GM12878 (cell line): ENCODE measurements at regions of chr4 and their contacts with region 1.

Region 1: GRCh38 chr4:102760645-102761295 is at the start of gene MANBA:
- DNase-seq: no peak
- ATAC-seq: peak; percentile 94
- H3K4me3 ChIP-seq: peak within 1 kb of the TSS; percentile 98
- H3K27ac ChIP-seq: peak within 1 kb of the TSS; percentile 85
- H3K4me1 ChIP-seq: no peaks in the 10 kb centered on the region; the same call in 1 of the 2 replicates
- H3K27me3 ChIP-seq: no peaks in the 10 kb centered on the region
- CTCF ChIP-seq: no peak
- EP300 ChIP-seq: no peak
- POLR2A ChIP-seq: peak; percentile 97
- RAD21 ChIP-seq: no peak
- polyA plus RNA-seq, gene MANBA: 3.8 to 6.9 TPM

Region 2: DNA sequence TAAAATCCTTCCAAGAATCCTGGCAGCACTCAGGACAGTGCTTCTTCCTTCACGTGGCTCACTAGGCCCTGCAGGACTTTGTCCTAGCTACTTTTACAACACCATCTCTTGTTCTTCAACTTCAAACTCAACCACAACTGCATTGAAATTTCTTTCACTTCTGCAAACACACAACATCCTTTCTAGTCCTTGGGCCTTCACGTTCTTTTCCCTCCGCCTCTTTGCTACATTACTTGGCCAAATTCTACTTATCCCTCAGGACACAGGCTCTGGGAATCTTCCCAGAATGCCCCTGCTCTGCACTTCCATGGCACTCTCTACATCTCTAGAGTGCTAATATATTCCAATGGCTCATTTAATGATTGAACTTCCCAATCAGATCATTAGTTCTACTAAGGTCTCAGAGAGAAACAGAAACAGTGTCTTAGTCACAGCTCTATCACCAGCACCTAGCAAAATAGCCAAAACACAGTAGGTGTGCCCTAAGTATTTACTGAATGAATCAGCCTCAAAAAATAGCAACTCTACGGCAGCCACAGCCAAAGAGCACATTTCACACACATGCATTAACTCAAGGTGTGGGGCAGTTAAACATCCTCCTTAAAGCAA is 73.3 kb before region 1 on chr4:
- CTCF ChIA-PET with region 1: no interaction called
- POLR2A ChIA-PET with region 1: interaction called, 3 read pairs
- RAD21 ChIA-PET with region 1: interaction called, 27 read pairs
- SMC1A ChIA-PET with region 1: interaction called, 5 read pairs
- in situ Hi-C with region 1: no loop called
- intact Hi-C with region 1: loop called (anchors 1 kb)
- DNase-seq: peak; percentile 93
- ATAC-seq: peak; percentile 91
- H3K4me3 ChIP-seq: peak overlapping the region; percentile 54; the same call in 1 of the 2 replicates
- H3K27ac ChIP-seq: peak overlapping the region; percentile 90
- H3K4me1 ChIP-seq: peaks cover 36% of the 10 kb centered on the region
- H3K27me3 ChIP-seq: no peaks in the 10 kb centered on the region
- CTCF ChIP-seq: no peak
- EP300 ChIP-seq: peak in 1 of 2 experiments; percentile 69; a peak in 2 of 4 replicates
- POLR2A ChIP-seq: no peak
- RAD21 ChIP-seq: no peak

Region 3: DNA sequence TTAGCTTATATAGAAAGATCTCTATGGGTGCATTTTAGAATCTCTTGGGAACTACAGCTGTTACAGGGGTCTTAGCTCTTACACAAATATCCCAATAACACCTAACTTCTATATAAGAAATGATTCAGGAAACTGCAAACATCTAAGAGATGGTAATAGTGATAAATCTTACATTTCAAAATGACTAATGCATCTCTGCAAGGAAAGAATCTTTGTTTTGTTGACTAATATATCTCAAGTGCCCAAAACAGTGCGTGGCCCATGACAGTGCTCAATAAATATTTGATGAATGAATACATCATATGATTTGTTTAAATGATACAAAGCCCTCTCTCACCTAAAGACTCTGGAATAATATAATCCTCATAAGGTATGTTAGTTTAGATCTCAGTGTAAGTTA is 389.9 kb after region 1 on chr4:
- CTCF ChIA-PET with region 1: no interaction called
- POLR2A ChIA-PET with region 1: no interaction called
- RAD21 ChIA-PET with region 1: no interaction called
- SMC1A ChIA-PET with region 1: no interaction called
- in situ Hi-C with region 1: no loop called
- intact Hi-C with region 1: no loop called
- DNase-seq: no peak
- ATAC-seq: no peak
- H3K4me3 ChIP-seq: no peak overlapping the region
- H3K27ac ChIP-seq: no peak overlapping the region
- H3K4me1 ChIP-seq: no peaks in the 10 kb centered on the region
- H3K27me3 ChIP-seq: no peaks in the 10 kb centered on the region
- CTCF ChIP-seq: no peak
- EP300 ChIP-seq: no peak
- POLR2A ChIP-seq: no peak
- RAD21 ChIP-seq: no peak